ENCODE measurements at regions of chr18 and their contacts with region 1.

Region 1: GRCh38 chr18:21194871-21195771 is 46.9 kb upstream of the GREB1L start:
- H3K4me3 Mint-ChIP-seq: no peak overlapping the region
- H3K27ac Mint-ChIP-seq: no peak overlapping the region
- H3K4me1 Mint-ChIP-seq: no peaks in the 10 kb centered on the region
- H3K27me3 Mint-ChIP-seq: peaks cover 26% of the 10 kb centered on the region

Region 2: DNA sequence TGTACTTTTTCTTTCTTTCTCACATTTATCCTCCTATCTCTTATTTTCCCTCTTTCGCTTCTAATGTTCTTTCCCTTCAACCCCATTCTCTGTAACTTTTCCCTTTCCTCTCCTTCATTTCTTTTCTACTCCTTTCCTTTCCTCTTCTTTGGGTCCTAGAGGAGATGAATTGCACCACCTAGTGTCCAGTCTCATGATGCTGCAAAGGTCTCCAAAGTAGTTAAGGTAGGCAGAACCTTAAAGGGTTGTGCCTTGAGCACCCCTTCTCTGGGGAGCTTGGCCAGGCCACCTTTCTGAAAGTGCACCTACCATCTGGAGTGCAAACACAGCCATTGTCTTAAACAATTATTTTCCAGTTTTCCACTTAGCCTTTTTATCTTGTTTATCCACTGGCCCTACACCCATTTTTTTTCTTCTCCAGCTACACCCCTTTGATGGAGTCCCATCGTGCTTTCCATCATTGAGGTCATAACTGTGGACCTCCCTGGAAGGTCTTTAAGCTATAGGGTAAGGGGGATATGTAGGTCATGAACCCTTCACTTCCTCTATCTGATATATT is 249.4 kb after region 1 on chr18:
- intact Hi-C with region 1: loop called (anchors 2 kb)
- H3K4me3 Mint-ChIP-seq: no peak overlapping the region
- H3K27ac Mint-ChIP-seq: no peak overlapping the region
- H3K4me1 Mint-ChIP-seq: peaks cover 7% of the 10 kb centered on the region
- H3K27me3 Mint-ChIP-seq: peaks cover 6% of the 10 kb centered on the region

Region 3: GRCh38 chr18:22703883-22704585 is 1508.9 kb after region 1 on chr18:
- intact Hi-C with region 1: loop called (anchors 5 kb)
- H3K4me3 Mint-ChIP-seq: no peak overlapping the region
- H3K27ac Mint-ChIP-seq: no peak overlapping the region
- H3K4me1 Mint-ChIP-seq: no peaks in the 10 kb centered on the region
- H3K27me3 Mint-ChIP-seq: no peaks in the 10 kb centered on the region